Posterior cingulate gyrus (tissue), 11 donors: ENCODE measurements at regions of chr12 and their contacts with region 1.

Region 1: DNA sequence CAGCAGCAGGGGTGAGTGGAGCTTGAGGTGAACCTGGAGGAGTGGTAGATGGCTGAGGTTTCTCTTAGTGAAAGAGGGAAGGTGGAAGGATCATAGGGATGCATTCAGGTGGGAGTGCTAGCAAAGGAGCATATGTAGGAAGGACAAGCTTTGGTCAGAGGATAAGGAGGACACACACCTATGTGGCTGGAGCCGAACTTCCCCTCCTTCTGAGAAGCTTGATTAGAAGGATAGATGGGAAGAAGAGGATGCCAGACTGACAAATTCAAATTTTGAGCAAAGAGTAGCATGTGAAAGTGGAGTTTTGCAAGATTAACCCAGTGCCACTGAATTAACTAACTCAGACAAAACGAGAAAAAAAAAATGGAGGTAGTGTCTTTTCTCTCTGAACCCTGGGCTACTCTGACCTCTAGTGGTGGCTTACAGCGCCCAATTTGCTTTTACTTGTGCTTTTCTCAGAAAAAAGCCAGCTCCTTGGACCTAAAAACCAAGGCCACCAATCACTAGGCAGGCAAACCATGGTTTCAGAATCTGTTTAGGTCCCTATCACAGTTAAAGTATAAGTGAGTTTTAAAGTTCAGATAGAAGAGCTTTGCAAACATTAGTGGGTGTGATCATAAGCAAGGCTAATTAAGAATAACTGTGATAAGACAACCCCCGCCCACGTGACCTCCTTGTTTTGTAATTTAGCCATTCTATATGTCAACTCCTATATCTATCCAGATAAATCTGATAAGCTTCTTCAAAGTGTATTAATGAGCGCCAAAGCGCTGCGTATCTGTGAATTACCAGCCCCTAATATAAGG is 15.5 kb downstream of the EMP1 start:
- DNase-seq: peak in 7 of 10 donors; percentile 17 to 90 (median 65)

Region 2: DNA sequence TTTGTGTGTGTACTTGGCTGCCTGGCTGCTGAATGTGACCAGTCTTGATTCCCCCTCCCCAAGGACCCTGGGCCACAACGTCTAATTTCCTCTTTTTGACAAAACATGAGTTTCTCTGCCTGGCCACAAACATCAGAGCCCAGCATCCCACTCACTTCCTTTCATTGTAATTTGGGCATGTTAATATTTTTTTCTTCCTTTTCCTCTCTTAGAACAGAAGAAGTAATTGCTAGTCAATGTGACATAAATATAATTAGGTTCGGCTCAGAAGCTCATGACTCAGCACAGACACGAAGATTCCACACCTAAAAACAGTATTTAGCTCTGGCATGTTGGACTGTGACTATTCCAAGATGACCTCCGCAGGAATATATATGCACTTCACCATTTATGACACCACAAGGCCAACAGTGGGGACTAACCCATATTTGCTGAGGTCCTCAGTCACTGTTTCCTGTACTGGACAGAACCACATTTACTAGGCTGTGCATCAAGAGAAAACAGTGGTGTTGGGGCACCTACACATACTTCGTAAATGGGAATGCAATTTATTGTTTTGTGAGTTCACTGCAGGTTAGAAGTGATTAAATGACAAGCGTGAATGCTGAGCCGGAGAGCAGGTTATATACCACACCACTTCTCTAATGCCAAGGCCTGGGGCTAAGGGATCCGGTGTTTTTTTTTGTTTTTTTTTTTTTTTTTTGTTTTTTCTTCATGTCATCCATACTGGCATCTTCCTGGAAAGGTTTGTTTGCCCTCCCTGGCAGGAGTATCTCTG is 112.8 kb before region 1 on chr12:
- intact Hi-C with region 1: loop called (anchors 1 kb)
- DNase-seq: no peak

Region 3: GRCh38 chr12:13173012-13173932 is 38.8 kb before region 1 on chr12:
- intact Hi-C with region 1: no loop called
- DNase-seq: peak in 3 of 10 donors; percentile 17 to 84 (median 53)